H1 (cell line): ENCODE measurements at regions of chr13 and their contacts with region 1.

Region 1: DNA sequence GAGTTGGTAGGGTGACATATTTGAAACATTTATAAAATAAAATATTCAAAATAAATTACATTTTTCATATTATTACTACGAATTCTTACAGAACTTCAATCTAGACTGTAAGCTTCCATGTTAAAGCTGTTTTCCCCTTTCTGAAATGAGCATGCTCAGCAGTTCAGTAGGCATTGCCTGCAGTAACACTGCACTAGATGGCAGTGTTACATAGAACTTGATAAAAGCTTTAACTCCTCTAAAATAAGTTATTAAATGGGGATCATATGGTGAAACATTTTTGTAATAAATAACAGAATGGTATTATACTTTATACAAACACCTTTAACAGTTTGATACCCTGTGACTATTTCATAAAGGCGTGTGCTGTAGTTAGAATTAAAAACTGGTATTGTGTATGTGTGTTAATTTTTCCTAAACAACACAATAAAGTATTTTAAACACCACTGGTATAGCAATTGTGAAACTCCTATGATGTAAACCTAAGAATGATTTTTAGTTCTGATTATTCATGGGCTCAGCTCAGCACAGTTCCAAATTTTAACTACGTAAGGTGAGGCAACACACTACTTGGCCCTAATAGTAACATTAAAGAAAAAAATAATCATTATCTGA is 11.6 kb upstream of the GPR18 start:
- DNase-seq: no peak
- H3K4me3 ChIP-seq: no peak overlapping the region
- H3K27ac ChIP-seq: no peak overlapping the region
- H3K4me1 ChIP-seq: no peaks in the 10 kb centered on the region
- H3K27me3 ChIP-seq: no peaks in the 10 kb centered on the region
- CTCF ChIP-seq: peak in 2 of 3 experiments; percentile 48 to 53; a peak in 3 of 4 replicates
- EP300 ChIP-seq: no peak
- POLR2A ChIP-seq: no peak
- RAD21 ChIP-seq: peak; percentile 63 to 66

Region 2: DNA sequence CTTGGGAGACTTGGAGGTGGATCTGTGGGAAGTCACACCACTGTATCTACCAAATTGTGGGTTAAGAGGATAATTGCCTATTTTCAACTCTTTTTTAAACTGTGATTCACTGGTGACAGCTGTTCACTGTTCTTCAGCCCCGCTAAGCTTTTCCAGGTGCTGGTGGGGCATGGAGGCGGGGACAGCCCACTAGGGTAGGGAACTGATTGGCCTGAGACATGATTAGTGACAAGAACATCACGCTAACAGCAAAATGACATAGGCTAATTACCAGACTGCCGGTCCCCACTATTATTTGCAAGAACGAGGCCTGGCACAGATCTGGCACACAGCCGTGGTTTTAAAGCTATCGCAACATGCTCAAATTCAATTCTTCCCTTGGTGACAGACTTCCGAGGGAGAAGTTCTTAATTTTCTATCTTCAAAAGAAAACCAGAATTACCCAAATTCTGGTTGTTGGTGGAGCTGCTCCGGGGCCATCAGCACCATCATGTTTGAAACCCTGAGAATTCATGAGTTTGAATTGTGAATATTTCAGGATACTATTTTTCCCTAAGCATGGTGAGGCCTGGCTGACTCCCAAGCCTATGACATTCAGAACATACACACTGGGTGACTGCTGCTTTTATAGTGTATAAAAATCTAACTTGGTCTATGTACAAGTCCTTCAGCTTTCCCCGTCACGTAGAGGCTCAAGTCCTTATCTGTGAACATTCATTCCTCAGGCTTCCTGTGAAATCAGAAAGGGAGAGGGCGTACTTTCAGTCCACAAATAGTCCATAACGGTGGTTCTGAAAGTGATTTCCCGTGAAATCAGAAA is 309.7 kb before region 1 on chr13:
- CTCF ChIA-PET with region 1: no interaction called
- POLR2A ChIA-PET with region 1: no interaction called
- DNase-seq: no peak
- H3K4me3 ChIP-seq: no peak overlapping the region
- H3K27ac ChIP-seq: no peak overlapping the region
- H3K4me1 ChIP-seq: peaks cover 0 to 2% (median 0%) of the 10 kb centered on the region in 4 experiments; a peak in 2 of 7 replicates
- H3K27me3 ChIP-seq: peaks cover 0 to 2% (median 0%) of the 10 kb centered on the region in 4 experiments; a peak in 1 of 7 replicates
- CTCF ChIP-seq: no peak
- EP300 ChIP-seq: no peak
- POLR2A ChIP-seq: no peak
- RAD21 ChIP-seq: no peak

Region 3: DNA sequence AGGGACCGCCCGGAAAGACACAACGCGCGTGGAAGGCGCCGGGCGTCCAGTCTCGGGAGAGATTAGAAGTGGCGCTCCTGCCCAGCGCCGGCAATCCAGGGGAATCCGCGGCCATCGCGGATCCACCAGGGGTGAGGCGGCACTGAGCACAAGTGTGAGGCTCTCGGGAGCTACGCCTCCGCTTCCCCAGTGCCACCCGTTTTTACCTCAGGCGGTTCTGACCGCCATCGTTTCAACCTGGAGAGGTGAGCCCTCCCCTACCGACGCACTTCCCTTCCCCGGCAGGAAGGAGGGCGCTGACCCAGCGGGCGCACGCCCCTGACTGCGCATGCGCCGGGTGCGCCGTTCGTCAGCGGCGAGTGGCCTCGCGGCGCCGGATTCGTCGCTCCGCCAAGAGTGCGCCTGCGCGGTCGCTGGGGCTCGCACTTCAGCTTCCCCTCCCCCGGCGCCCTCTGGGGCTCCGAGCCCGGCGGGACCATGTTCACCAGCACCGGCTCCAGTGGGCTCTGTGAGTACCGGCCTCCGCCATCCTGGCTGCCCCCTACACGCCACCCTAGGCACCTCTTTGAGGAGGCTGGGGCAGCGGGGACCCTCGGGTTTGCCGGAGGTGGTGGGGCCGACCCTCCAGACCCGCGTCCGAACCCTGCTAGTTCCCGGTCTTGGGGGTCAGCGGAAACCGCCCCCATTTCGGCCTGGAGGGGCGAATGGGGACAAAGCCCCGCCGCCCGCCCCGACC is 69.1 kb before region 1 on chr13 and contains the start of gene UBAC2:
- CTCF ChIA-PET with region 1: interaction called, 65 read pairs
- POLR2A ChIA-PET with region 1: interaction called, 17 read pairs
- DNase-seq: peak; percentile 90 to 96
- H3K4me3 ChIP-seq: peak within 1 kb of the TSS; percentile 81 to 94 (median 88)
- H3K27ac ChIP-seq: peak within 1 kb of the TSS; percentile 94
- H3K4me1 ChIP-seq: peaks cover 0 to 7% (median under 1%) of the 10 kb centered on the region in 4 experiments; a peak in 3 of 7 replicates
- H3K27me3 ChIP-seq: no peaks in the 10 kb centered on the region
- CTCF ChIP-seq: no peak
- EP300 ChIP-seq: no peak
- POLR2A ChIP-seq: peak; percentile 99
- RAD21 ChIP-seq: no peak
- total RNA-seq, gene UBAC2: 73.6 and 75.9 TPM in 2 replicates

Region 4: GRCh38 chr13:99258210-99258860 is 11.4 kb before region 1 on chr13 and contains the start of gene GPR18:
- CTCF ChIA-PET with region 1: interaction called, 34 read pairs
- POLR2A ChIA-PET with region 1: interaction called, 5 read pairs
- DNase-seq: no peak
- H3K4me3 ChIP-seq: no peak within 1 kb of the TSS
- H3K27ac ChIP-seq: no peak within 1 kb of the TSS
- H3K4me1 ChIP-seq: no peaks in the 10 kb centered on the region
- H3K27me3 ChIP-seq: no peaks in the 10 kb centered on the region
- CTCF ChIP-seq: no peak
- EP300 ChIP-seq: no peak
- POLR2A ChIP-seq: no peak
- RAD21 ChIP-seq: no peak
- total RNA-seq, gene GPR18: not detected in 2 replicates

Region 5: GRCh38 chr13:99366075-99366987 is 96.6 kb after region 1 on chr13:
- CTCF ChIA-PET with region 1: interaction called, 27 read pairs
- POLR2A ChIA-PET with region 1: no interaction called
- DNase-seq: peak in 1 of 2 experiments; percentile 23
- H3K4me3 ChIP-seq: no peak overlapping the region
- H3K27ac ChIP-seq: no peak overlapping the region
- H3K4me1 ChIP-seq: peaks cover 0 to 4% (median 2%) of the 10 kb centered on the region in 4 experiments; a peak in 2 of 7 replicates
- H3K27me3 ChIP-seq: no peaks in the 10 kb centered on the region
- CTCF ChIP-seq: no peak
- EP300 ChIP-seq: no peak
- POLR2A ChIP-seq: no peak
- RAD21 ChIP-seq: no peak

Region 6: DNA sequence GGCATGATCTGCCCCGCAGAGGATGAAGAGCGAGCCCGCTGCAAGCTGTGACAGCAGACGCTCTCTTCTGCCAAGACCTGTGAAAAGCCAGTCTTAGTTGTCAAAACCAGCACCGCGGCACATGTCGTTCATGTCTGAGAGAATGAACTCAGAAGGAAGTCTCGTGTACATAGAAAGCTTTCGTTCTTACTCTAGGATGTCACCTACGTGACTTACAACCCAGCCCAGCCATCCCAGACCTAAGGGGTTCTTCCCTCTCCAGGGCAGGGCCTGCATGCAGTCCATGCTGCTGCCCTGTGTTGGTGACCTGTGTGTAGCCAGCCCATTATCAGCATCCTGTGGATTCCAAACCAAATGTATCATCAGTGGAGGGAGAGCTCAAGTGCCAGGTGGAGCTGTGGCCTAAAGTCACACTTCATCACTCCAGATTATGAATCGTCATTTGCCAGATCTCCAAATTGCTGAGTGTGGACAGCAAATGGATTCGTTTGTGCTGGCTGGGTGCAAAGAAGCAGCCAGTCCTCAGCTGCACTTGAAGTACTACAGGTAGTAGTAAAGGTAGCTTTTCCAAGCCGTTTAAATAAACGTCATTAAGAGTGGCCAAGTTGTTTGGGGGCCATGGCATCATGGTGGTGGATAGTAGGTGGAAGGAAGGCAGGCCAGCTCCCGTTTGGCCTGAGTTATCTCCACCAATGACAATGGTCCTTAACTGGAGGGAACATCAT is 111.3 kb after region 1 on chr13:
- CTCF ChIA-PET with region 1: interaction called, 20 read pairs
- POLR2A ChIA-PET with region 1: no interaction called
- DNase-seq: peak in 1 of 2 experiments; percentile 19
- H3K4me3 ChIP-seq: no peak overlapping the region
- H3K27ac ChIP-seq: no peak overlapping the region
- H3K4me1 ChIP-seq: peaks cover 2 to 19% (median 10%) of the 10 kb centered on the region in 4 experiments
- H3K27me3 ChIP-seq: no peaks in the 10 kb centered on the region
- CTCF ChIP-seq: no peak
- EP300 ChIP-seq: no peak
- POLR2A ChIP-seq: no peak
- RAD21 ChIP-seq: no peak